ENCODE measurements at regions of chr18 and their contacts with region 1.

Region 1: GRCh38 chr18:26090130-26091046 is at the start of gene SS18:
- DNase-seq: peak; percentile 79 to 90 (median 87)
- ATAC-seq: peak; percentile 91
- H3K4me3 ChIP-seq: peak within 1 kb of the TSS; percentile 95
- H3K4me3 Mint-ChIP-seq: peak within 1 kb of the TSS; percentile 94 to 99 (median 97)
- H3K27ac ChIP-seq: peak within 1 kb of the TSS; percentile 96
- H3K27ac Mint-ChIP-seq: peak within 1 kb of the TSS; percentile 95 to 99 (median 98)
- H3K4me1 ChIP-seq: peaks cover 9 to 13% of the 10 kb centered on the region in 2 donors
- H3K4me1 Mint-ChIP-seq: peaks cover 23 to 44% (median 38%) of the 10 kb centered on the region in 7 donors
- H3K27me3 ChIP-seq: no peaks in the 10 kb centered on the region
- H3K27me3 Mint-ChIP-seq: no peaks in the 10 kb centered on the region
- total RNA-seq, gene SS18: 50.9 to 85.8 (median 77.3) TPM

Region 2: DNA sequence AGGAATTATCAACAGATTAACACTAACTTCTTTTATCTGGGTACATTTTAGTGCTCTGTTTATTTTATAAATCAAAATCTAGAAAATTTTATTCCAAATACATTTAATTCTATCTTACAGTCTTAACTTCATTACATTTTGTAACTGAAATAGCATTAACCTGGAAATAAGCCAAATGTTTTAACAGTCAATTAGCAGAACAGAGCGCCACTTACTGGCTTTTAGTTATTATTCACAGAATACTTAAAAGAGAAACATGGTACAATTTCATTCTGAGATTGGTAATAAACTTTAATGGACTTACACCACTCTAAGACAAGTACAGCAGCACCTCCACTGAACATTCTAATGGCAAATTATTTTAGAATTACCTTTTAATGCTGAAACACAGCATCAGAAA is 38.5 kb before region 1 on chr18:
- CTCF ChIA-PET with region 1: no interaction called
- POLR2A ChIA-PET with region 1: no interaction called
- intact Hi-C with region 1: loop called in 1 of 2 experiments (anchors 5 kb)
- DNase-seq: no peak
- ATAC-seq: no peak
- H3K4me3 ChIP-seq: no peak overlapping the region
- H3K4me3 Mint-ChIP-seq: no peak overlapping the region
- H3K27ac ChIP-seq: no peak overlapping the region
- H3K27ac Mint-ChIP-seq: no peak overlapping the region
- H3K4me1 ChIP-seq: no peaks in the 10 kb centered on the region
- H3K4me1 Mint-ChIP-seq: peaks cover 0 to 19% (median 14%) of the 10 kb centered on the region in 7 donors
- H3K27me3 ChIP-seq: no peaks in the 10 kb centered on the region
- H3K27me3 Mint-ChIP-seq: no peaks in the 10 kb centered on the region

Region 3: GRCh38 chr18:26133652-26134051 is 43.3 kb after region 1 on chr18 and contains the start of gene PSMA8:
- CTCF ChIA-PET with region 1: no interaction called
- POLR2A ChIA-PET with region 1: interaction called, 3 read pairs
- intact Hi-C with region 1: loop called (anchors 1 kb)
- DNase-seq: peak; percentile 27 to 68 (median 52)
- ATAC-seq: peak; percentile 85
- H3K4me3 ChIP-seq: peak within 1 kb of the TSS; percentile 38
- H3K4me3 Mint-ChIP-seq: peak within 1 kb of the TSS; percentile 56 to 88 (median 81)
- H3K27ac ChIP-seq: peak within 1 kb of the TSS; percentile 75
- H3K27ac Mint-ChIP-seq: peak within 1 kb of the TSS; percentile 72 to 94 (median 85)
- H3K4me1 ChIP-seq: no peaks in the 10 kb centered on the region
- H3K4me1 Mint-ChIP-seq: peaks cover 0 to 13% (median 5%) of the 10 kb centered on the region in 7 donors
- H3K27me3 ChIP-seq: no peaks in the 10 kb centered on the region
- H3K27me3 Mint-ChIP-seq: no peaks in the 10 kb centered on the region
- total RNA-seq, gene PSMA8: 0.19 to 0.89 (median 0.59) TPM

Region 4: DNA sequence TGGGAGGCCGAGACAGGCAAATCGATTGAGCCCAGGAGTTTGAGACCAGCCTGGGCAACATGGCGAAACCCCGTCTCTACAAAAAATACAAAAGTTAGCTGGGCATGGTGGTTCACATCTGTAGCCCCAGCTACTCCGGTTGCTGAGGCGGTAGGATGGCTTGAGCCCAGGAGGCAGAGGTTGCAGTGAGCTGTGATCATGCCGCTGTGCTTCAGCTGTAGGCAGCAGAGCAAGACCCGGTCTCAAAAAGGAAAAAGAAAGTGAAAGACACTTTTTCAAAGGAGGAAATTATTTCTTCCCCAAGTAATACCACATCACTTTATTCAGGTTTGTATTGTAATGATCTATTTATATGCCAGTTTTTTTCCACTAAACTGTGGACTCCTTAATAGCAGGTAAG is 100.1 kb after region 1 on chr18:
- CTCF ChIA-PET with region 1: no interaction called
- POLR2A ChIA-PET with region 1: no interaction called
- intact Hi-C with region 1: loop called (anchors 1 kb)
- DNase-seq: peak in 8 of 9 donors; percentile 22 to 61 (median 48)
- ATAC-seq: peak; percentile 85
- H3K4me3 ChIP-seq: peak overlapping the region; percentile 26
- H3K4me3 Mint-ChIP-seq: peak overlapping the region; percentile 74 to 88 (median 83)
- H3K27ac ChIP-seq: peak overlapping the region; percentile 63
- H3K27ac Mint-ChIP-seq: peak overlapping the region; percentile 87 to 93 (median 92)
- H3K4me1 ChIP-seq: no peaks in the 10 kb centered on the region
- H3K4me1 Mint-ChIP-seq: peaks cover 5 to 34% (median 28%) of the 10 kb centered on the region in 7 donors
- H3K27me3 ChIP-seq: no peaks in the 10 kb centered on the region
- H3K27me3 Mint-ChIP-seq: no peaks in the 10 kb centered on the region

Region 5: GRCh38 chr18:26226229-26227005 is 136.0 kb after region 1 on chr18 and contains the start of gene TAF4B:
- CTCF ChIA-PET with region 1: no interaction called
- POLR2A ChIA-PET with region 1: interaction called, 11 read pairs
- intact Hi-C with region 1: loop called (anchors 1 kb)
- DNase-seq: peak; percentile 87 to 98 (median 92)
- ATAC-seq: peak; percentile 95
- H3K4me3 ChIP-seq: peak within 1 kb of the TSS; percentile 58
- H3K4me3 Mint-ChIP-seq: peak within 1 kb of the TSS; percentile 90 to 97 (median 96)
- H3K27ac ChIP-seq: peak within 1 kb of the TSS; percentile 86
- H3K27ac Mint-ChIP-seq: peak within 1 kb of the TSS; percentile 87 to 99 (median 98)
- H3K4me1 ChIP-seq: peaks cover 5 to 20% of the 10 kb centered on the region in 2 donors
- H3K4me1 Mint-ChIP-seq: peaks cover 18 to 48% (median 36%) of the 10 kb centered on the region in 7 donors
- H3K27me3 ChIP-seq: no peaks in the 10 kb centered on the region
- H3K27me3 Mint-ChIP-seq: peaks cover 0 to 5% (median 0%) of the 10 kb centered on the region in 5 donors
- total RNA-seq, gene TAF4B: 12.0 to 15.7 (median 12.6) TPM

Measured in naive thymus-derived CD4-positive, alpha-beta T cell (primary cell).